ENCODE measurements at regions of chr3 and their contacts with region 1.

Region 1: DNA sequence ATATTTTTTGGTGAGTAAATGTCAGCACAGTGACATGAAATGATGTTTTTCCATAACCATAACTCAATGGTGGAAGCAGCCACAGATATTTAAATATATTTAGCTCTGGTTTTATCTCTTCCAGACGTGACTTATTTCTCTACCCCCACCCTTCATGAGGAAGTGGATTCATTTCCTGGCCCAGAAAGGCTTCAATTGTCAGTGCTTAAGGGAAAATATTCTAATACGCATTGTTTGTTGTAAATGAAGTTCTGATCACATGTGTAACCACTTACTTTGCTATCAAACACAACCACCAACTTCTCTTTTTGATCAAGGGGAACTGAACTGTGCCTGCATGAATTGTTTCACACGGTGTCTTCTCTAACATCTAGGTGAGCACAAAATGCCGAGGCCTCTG is 14.0 kb downstream of the CLDN16 start:
- DNase-seq: no peak
- ATAC-seq: no peak
- H3K4me3 ChIP-seq: no peak overlapping the region
- H3K4me3 Mint-ChIP-seq: no peak overlapping the region
- H3K27ac ChIP-seq: no peak overlapping the region
- H3K27ac Mint-ChIP-seq: no peak overlapping the region
- H3K4me1 ChIP-seq: no peaks in the 10 kb centered on the region
- H3K4me1 Mint-ChIP-seq: no peaks in the 10 kb centered on the region
- H3K27me3 ChIP-seq: peaks cover 0 to 3% of the 10 kb centered on the region in 2 experiments
- H3K27me3 Mint-ChIP-seq: peaks cover 5% of the 10 kb centered on the region in 2 donors

Region 2: DNA sequence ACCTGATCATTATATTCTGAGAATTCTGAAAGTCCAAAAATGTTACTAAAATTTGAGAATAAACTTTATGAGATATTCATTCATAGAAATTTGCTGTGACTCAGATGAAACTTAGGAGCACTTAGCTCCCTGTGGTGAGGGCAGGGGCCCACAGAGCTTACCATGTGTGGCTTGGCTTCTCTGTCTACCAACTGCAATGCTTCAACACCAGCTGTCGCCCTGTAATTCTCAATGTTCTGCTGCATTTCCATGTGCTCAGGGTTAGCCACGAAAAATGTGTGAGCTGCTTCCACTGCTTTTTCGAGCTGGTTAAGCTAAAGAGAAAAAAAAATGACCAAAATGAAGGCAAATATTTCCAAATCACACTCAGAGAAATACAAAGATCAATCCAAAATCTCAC is 406.8 kb before region 1 on chr3:
- CTCF ChIA-PET with region 1: no interaction called
- POLR2A ChIA-PET with region 1: no interaction called
- DNase-seq: no peak
- ATAC-seq: no peak
- H3K4me3 ChIP-seq: no peak overlapping the region
- H3K4me3 Mint-ChIP-seq: no peak overlapping the region
- H3K27ac ChIP-seq: no peak overlapping the region
- H3K27ac Mint-ChIP-seq: no peak overlapping the region
- H3K4me1 ChIP-seq: no peaks in the 10 kb centered on the region
- H3K4me1 Mint-ChIP-seq: no peaks in the 10 kb centered on the region
- H3K27me3 ChIP-seq: peaks cover 0 to 3% of the 10 kb centered on the region in 2 experiments
- H3K27me3 Mint-ChIP-seq: peaks cover 21 to 29% of the 10 kb centered on the region in 2 donors

Region 3: GRCh38 chr3:190346541-190346940 is 55.4 kb before region 1 on chr3:
- CTCF ChIA-PET with region 1: interaction called in 1 of 2 experiments, 12 read pairs
- POLR2A ChIA-PET with region 1: no interaction called
- DNase-seq: no peak
- ATAC-seq: no peak
- H3K4me3 ChIP-seq: no peak overlapping the region
- H3K4me3 Mint-ChIP-seq: no peak overlapping the region
- H3K27ac ChIP-seq: no peak overlapping the region
- H3K27ac Mint-ChIP-seq: no peak overlapping the region
- H3K4me1 ChIP-seq: no peaks in the 10 kb centered on the region
- H3K4me1 Mint-ChIP-seq: no peaks in the 10 kb centered on the region
- H3K27me3 ChIP-seq: no peaks in the 10 kb centered on the region
- H3K27me3 Mint-ChIP-seq: peaks cover 9 to 24% of the 10 kb centered on the region in 2 donors

Region 4: DNA sequence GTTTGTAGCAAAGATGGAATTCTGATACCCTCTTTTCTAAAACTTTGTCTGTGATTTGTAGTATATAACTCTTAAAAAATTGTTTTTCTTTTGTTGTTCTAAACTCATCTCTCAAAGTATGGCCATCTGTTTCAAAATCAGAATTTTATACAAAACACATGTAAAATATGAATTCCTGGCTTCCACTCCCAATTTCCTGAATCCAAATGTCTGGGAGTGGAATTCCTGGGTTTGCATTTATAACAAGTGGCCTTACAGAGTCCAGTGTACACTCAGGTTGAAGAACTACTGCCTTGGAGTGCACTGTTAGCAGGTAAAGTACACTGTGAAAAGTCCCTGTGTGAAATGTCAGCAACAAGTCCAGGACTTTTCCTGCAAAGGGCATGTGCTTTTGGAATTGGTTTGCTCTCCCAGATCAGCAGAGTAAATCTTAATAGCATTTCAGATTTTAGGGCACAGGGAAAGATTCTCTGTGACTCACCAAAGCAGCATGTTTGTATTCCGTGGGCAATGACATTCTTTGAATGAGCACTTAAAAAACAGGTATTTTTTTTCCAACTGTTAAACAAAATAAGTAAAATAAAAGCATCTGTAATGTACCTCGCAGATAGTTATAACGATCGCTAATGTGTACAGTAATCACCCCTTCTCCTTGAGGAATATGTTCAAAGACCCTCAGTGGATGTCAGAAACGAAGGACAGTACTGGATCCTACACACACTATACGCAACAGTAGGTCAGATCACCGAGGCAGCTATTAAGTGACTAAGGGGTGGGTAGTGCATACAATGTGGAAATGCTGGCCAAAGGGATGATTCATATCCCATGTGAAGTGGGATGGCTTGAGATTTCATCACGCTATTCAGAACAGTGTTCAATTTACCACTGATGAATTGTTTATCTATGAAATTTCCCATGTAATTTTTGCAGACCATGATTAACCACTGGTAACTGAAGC is 16.0 kb before region 1 on chr3:
- CTCF ChIA-PET with region 1: no interaction called
- POLR2A ChIA-PET with region 1: interaction called in 1 of 2 experiments, 11 read pairs
- DNase-seq: no peak
- ATAC-seq: no peak
- H3K4me3 ChIP-seq: no peak overlapping the region
- H3K4me3 Mint-ChIP-seq: no peak overlapping the region
- H3K27ac ChIP-seq: no peak overlapping the region
- H3K27ac Mint-ChIP-seq: no peak overlapping the region
- H3K4me1 ChIP-seq: no peaks in the 10 kb centered on the region
- H3K4me1 Mint-ChIP-seq: no peaks in the 10 kb centered on the region
- H3K27me3 ChIP-seq: no peaks in the 10 kb centered on the region
- H3K27me3 Mint-ChIP-seq: peaks cover 4 to 13% of the 10 kb centered on the region in 2 donors

Measured in T-cell (primary cell).